ENCODE measurements at regions of chr2 and their contacts with region 1.

Region 1: DNA sequence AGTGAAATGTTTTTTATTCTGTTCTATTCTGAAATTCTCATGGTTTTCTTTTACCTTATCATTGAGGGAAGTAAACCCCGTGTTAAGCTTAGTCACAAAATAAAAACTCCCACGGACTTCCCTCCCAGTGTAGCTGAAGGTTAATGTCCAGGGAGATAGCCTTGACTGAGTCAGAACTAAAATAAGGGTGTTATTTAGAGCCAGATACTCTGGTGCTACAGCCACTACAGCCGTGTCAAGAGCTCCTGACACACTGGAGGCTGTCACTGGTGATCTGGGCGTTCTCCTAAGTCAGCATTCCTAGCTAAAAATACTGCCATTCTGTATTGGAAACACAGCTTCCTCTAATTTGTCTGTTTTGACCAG is 82.0 kb upstream of the RANBP2 start:
- DNase-seq: no peak
- ATAC-seq: peak; percentile 79
- H3K4me3 ChIP-seq: no peak overlapping the region
- H3K4me3 Mint-ChIP-seq: no peak overlapping the region
- H3K27ac ChIP-seq: no peak overlapping the region
- H3K27ac Mint-ChIP-seq: no peak overlapping the region
- H3K4me1 ChIP-seq: no peaks in the 10 kb centered on the region
- H3K4me1 Mint-ChIP-seq: peaks cover 14 to 65% (median 35%) of the 10 kb centered on the region in 7 donors
- H3K27me3 ChIP-seq: no peaks in the 10 kb centered on the region
- H3K27me3 Mint-ChIP-seq: no peaks in the 10 kb centered on the region

Region 2: DNA sequence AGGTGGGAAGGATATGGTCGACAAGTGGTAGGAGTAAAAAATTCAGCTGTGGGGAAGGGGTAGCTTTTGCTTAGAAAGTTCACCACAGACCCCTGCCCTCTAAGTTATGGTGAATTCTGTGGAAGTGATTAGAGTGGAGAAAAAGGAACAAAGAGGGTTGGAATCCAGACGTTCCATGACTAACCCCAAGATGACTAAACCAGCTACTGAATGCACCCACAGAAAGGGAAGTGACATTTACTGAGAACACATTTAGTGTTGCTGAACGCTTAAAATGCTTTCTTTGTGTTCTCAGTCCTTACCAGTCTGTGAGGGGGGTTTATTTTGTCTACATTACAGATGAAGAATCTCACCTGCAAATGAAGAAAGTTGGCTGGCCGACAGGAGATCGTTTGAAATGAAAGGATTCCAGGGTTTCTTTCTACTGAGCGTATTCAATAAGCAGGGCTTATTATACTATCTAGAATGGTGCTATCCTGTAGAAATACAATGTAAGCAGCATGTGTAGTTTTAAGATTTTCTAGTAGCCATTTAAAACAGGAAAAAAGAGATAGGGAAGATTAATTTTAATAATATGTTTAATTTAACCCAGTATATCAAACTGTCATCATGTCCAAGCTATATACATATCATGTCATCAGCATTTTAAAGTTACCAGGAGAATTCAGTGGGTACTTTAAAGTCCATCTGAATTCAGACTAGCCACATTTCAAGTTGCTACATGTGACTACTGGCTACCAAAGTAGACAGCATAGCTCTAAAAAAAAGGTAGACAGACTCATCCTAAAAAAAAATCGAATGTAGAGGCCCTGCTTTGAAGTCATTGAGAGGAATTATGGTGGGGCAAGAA is 42.9 kb before region 1 on chr2:
- CTCF ChIA-PET with region 1: interaction called, 11 read pairs
- POLR2A ChIA-PET with region 1: no interaction called
- intact Hi-C with region 1: loop called (anchors 1 kb)
- DNase-seq: no peak
- ATAC-seq: peak; percentile 67
- H3K4me3 ChIP-seq: no peak overlapping the region
- H3K4me3 Mint-ChIP-seq: peak overlapping the region in 1 of 10 donors; percentile 47
- H3K27ac ChIP-seq: no peak overlapping the region
- H3K27ac Mint-ChIP-seq: peak overlapping the region in 4 of 9 donors; percentile 10 to 75 (median 37)
- H3K4me1 ChIP-seq: peaks cover 4 to 8% of the 10 kb centered on the region in 2 donors
- H3K4me1 Mint-ChIP-seq: peaks cover 6 to 49% (median 30%) of the 10 kb centered on the region in 7 donors
- H3K27me3 ChIP-seq: no peaks in the 10 kb centered on the region
- H3K27me3 Mint-ChIP-seq: no peaks in the 10 kb centered on the region

Region 3: DNA sequence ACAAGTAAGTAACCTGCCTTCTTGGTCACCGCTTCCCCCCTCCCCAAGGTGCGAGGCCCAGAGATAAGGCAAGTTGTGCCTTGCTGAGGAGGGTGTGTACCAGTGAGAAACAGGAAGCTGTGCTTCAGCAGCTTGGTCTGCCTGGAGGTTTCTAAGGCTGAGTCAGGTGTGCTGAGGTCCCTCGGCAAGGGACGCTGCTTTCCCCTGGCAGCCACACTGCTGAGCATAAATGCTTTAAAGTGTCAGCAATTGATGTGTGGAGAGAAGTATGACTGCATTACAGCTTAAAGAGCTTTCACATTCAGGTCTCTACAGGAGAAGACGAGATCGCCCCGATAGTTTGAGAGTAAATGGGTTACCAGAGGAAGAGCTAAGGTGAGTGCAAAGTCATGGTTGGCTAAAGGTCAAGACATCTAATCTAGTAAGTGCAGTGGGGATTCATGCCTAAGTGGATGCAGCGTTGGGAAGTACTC is 16.2 kb before region 1 on chr2:
- CTCF ChIA-PET with region 1: interaction called, 136 read pairs
- POLR2A ChIA-PET with region 1: interaction called, 13 read pairs
- intact Hi-C with region 1: loop called (anchors 1 kb)
- DNase-seq: peak; percentile 32 to 80 (median 75)
- ATAC-seq: peak; percentile 97
- H3K4me3 ChIP-seq: peak overlapping the region; percentile 59
- H3K4me3 Mint-ChIP-seq: peak overlapping the region; percentile 87 to 96 (median 91)
- H3K27ac ChIP-seq: peak overlapping the region; percentile 74
- H3K27ac Mint-ChIP-seq: peak overlapping the region; percentile 91 to 97 (median 94)
- H3K4me1 ChIP-seq: peaks cover 36 to 64% of the 10 kb centered on the region in 2 donors
- H3K4me1 Mint-ChIP-seq: peaks cover 44 to 93% (median 84%) of the 10 kb centered on the region in 7 donors
- H3K27me3 ChIP-seq: no peaks in the 10 kb centered on the region
- H3K27me3 Mint-ChIP-seq: no peaks in the 10 kb centered on the region

Measured in naive thymus-derived CD4-positive, alpha-beta T cell (primary cell).